Psoas muscle (tissue), 8 donors: ENCODE measurements at regions of chr21 and their contacts with region 1.

Region 1: GRCh38 chr21:45140346-45140940 is 66.1 kb downstream of the ADARB1 start:
- DNase-seq: peak; percentile 77 to 87
- ATAC-seq: peak; percentile 77 to 87 (median 82)
- H3K4me3 ChIP-seq: no peak overlapping the region
- H3K27ac ChIP-seq: no peak overlapping the region
- H3K4me1 ChIP-seq: peaks cover 35% of the 10 kb centered on the region
- H3K27me3 ChIP-seq: no peaks in the 10 kb centered on the region
- CTCF ChIP-seq: peak; percentile 85

Region 2: DNA sequence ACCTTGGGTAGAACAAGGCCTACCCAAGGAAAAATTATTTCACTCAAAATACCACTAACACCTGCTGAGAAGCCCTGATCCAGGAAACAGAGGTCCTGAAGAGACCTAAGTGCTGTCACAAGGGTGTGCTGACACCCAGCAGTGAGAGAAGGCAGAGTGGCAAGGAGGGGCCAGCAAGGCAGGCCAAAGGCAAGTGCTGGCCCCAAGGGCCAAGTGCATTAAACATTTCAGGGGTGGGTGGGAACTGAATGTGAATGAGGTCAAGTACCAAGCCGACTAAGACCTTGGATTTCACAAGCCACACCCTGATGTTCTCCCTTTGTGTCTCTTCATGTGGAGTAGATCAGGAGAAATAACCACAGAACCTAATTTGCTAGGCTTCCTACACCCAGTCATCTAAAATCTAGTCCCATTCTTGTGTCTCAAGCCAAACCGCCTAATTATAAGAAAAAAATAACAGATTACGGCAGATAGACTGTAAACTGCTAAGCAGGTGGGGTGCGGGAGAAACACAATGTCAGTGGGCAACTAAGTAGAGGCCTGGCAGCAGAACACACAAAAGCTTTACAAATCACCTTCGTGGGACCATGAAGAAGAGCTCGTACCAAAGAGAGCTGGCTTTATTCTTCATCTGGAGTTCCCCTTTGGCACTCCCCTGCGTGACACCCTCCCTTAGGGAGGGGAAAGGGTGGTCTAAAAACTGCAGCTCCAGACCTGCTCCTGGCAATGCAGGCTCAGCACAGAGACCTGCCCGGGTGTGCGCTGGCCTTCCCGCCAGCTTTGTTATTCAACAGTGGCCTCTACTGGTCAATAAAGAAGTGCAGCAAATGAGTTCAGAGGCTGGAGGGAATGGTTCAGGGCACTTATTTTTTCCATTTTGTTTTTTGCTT is 347.5 kb before region 1 on chr21:
- intact Hi-C with region 1: loop called in 1 of 2 experiments (anchors 10 kb)
- DNase-seq: peak; percentile 42 to 64
- ATAC-seq: peak; percentile 83 to 93 (median 88)
- H3K4me3 ChIP-seq: no peak overlapping the region
- H3K27ac ChIP-seq: no peak overlapping the region
- H3K4me1 ChIP-seq: peaks cover 30% of the 10 kb centered on the region
- H3K27me3 ChIP-seq: no peaks in the 10 kb centered on the region
- CTCF ChIP-seq: peak; percentile 76

Region 3: GRCh38 chr21:44892536-44893277 is 247.7 kb before region 1 on chr21:
- intact Hi-C with region 1: loop called in 1 of 2 experiments (anchors 2 kb)
- DNase-seq: peak; percentile 70 to 80
- ATAC-seq: peak; percentile 66 to 86 (median 74)
- H3K4me3 ChIP-seq: no peak overlapping the region
- H3K27ac ChIP-seq: no peak overlapping the region
- H3K4me1 ChIP-seq: no peaks in the 10 kb centered on the region
- H3K27me3 ChIP-seq: peaks cover 0 to 17% (median 7%) of the 10 kb centered on the region in 3 donors
- CTCF ChIP-seq: peak; percentile 78

Region 4: GRCh38 chr21:45000977-45001728 is 139.3 kb before region 1 on chr21:
- intact Hi-C with region 1: no loop called
- DNase-seq: peak; percentile 88 to 93
- ATAC-seq: peak; percentile 93 to 97 (median 94)
- H3K4me3 ChIP-seq: peak overlapping the region; percentile 24
- H3K27ac ChIP-seq: no peak overlapping the region
- H3K4me1 ChIP-seq: peaks cover 12% of the 10 kb centered on the region
- H3K27me3 ChIP-seq: peaks cover 0 to 2% (median 0%) of the 10 kb centered on the region in 3 donors
- CTCF ChIP-seq: no peak

Region 5: DNA sequence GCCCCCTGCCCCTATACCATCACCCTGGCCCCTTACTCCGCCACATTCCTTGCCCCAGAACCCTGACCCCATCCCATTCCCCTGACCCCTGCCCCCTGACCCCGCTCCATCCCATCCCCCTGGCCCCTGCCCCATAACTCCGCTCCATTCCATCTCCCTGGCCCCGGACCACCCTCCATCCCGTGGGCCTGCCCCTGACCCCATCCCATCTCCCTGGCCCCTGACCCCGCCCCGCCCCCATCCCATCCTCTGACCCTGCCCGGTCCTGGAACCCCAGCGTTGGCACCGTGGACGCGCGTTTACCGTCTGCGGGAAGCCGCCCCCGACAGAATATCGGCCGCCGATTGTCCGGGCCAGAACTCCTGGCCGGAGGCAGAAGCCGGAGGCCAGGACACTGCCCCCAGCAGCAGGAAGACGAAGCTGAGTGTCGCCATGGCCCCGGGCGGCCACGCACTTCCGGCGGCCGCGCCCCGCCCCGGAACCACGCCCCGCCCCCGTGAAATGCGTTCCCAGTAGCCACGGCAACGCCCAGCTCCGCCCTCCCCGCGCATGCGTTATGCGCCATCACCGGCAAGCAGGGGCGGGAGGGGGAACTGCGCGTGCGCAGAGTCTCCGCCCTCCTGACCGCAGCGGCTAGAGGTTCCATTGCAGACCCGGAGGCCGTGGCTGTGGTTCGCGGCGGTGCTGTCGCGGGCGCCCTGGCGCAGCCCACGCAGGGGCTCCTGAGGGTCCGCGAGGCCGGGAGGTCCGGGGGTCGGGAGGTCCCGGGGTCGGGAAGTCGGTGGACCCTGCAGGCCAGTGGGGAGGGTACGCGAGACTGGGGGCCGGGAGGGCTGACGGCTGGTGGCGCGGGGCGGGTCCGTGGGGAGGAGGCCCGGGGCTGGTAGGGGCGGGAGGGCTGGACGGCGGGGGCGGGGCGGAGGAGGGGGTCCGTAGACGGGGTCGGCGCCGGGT is 147.3 kb after region 1 on chr21 and contains the start of gene POFUT2:
- intact Hi-C with region 1: loop called (anchors 5 kb)
- DNase-seq: peak; percentile 97 to 99
- ATAC-seq: peak; percentile 92 to 96 (median 94)
- H3K4me3 ChIP-seq: peak within 1 kb of the TSS; percentile 75
- H3K27ac ChIP-seq: peak within 1 kb of the TSS; percentile 71
- H3K4me1 ChIP-seq: peaks cover 16% of the 10 kb centered on the region
- H3K27me3 ChIP-seq: no peaks in the 10 kb centered on the region
- CTCF ChIP-seq: no peak
- total RNA-seq, gene POFUT2: 5.6 to 13.9 (median 9.4) TPM